Tibial artery (tissue), 4 donors: ENCODE measurements at regions of chrX and their contacts with region 1.

Region 1: GRCh38 chrX:19046343-19047215 is 62.7 kb upstream of the PHKA2 start:
- DNase-seq: no peak
- H3K4me3 ChIP-seq: no peak overlapping the region
- H3K27ac ChIP-seq: no peak overlapping the region
- H3K4me1 ChIP-seq: no peaks in the 10 kb centered on the region
- H3K27me3 ChIP-seq: no peaks in the 10 kb centered on the region
- CTCF ChIP-seq: no peak

Region 2: GRCh38 chrX:18098763-18099162 is 947.8 kb before region 1 on chrX:
- intact Hi-C with region 1: no loop called
- DNase-seq: no peak
- H3K4me3 ChIP-seq: no peak overlapping the region
- H3K27ac ChIP-seq: no peak overlapping the region
- H3K4me1 ChIP-seq: peaks cover 0 to 3% (median 0%) of the 10 kb centered on the region in 4 donors
- H3K27me3 ChIP-seq: no peaks in the 10 kb centered on the region
- CTCF ChIP-seq: no peak

Region 3: GRCh38 chrX:18855919-18856644 is 190.5 kb before region 1 on chrX:
- intact Hi-C with region 1: no loop called
- DNase-seq: no peak
- H3K4me3 ChIP-seq: no peak overlapping the region
- H3K27ac ChIP-seq: no peak overlapping the region
- H3K4me1 ChIP-seq: no peaks in the 10 kb centered on the region
- H3K27me3 ChIP-seq: no peaks in the 10 kb centered on the region
- CTCF ChIP-seq: no peak

Region 4: GRCh38 chrX:20767346-20767745 is 1720.8 kb after region 1 on chrX:
- intact Hi-C with region 1: loop called (anchors 5 kb)
- DNase-seq: no peak
- H3K4me3 ChIP-seq: no peak overlapping the region
- H3K27ac ChIP-seq: no peak overlapping the region
- H3K4me1 ChIP-seq: no peaks in the 10 kb centered on the region
- H3K27me3 ChIP-seq: no peaks in the 10 kb centered on the region
- CTCF ChIP-seq: no peak